Astrocyte of the cerebellum (primary cell): ENCODE measurements at regions of chr5 and their contacts with region 1.

Region 1: GRCh38 chr5:145557345-145557744 is 277.8 kb downstream of the PRELID2 start:
- DNase-seq: no peak
- H3K4me3 ChIP-seq: no peak overlapping the region
- CTCF ChIP-seq: no peak

Region 2: DNA sequence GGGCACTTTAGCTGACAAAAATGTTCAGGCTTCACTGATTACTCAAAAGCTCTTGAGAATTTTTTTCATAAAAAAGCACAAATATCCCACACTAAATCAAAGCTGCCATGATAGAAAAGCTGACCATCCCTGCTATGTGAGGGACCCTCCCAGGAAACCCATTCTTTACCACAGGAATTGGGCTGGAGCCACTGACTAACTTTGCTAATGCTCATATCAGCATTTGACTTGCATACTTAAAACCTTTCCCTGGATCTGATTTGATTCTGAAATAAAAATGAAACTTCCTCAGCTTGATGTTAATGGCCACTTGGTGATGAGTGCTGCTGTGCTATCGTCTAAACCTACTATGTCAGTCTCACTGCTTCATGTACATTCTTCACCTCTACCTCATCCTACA is 34.2 kb after region 1 on chr5:
- in situ Hi-C with region 1: no loop called
- DNase-seq: no peak
- H3K4me3 ChIP-seq: no peak overlapping the region
- CTCF ChIP-seq: no peak

Region 3: DNA sequence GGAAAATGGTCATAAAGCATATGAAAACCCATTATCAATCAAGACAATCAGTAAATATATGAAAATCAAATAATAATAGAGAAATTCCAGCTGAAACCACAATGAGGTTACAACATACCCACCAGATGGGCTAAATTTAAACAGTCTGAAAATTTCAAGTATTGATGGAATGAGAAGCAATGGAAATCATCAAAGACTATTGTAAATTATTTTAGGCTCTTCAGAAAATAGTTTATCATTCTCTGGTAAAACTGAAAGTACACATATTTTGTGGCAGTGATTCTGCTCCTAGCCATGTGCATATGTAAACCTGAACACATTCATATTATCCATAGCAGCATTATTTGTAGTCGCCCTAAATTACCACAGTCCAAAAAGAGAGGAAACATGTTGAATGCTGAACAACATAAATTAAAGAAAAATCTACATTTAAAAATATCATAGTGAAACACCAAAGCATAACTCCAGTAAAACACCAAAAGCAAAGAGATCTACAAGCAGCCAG is 62.5 kb after region 1 on chr5:
- in situ Hi-C with region 1: loop called (anchors 5 kb)
- DNase-seq: no peak
- H3K4me3 ChIP-seq: no peak overlapping the region
- CTCF ChIP-seq: no peak

Region 4: GRCh38 chr5:145658435-145658834 is 101.1 kb after region 1 on chr5:
- in situ Hi-C with region 1: no loop called
- DNase-seq: no peak
- H3K4me3 ChIP-seq: no peak overlapping the region
- CTCF ChIP-seq: no peak